Caco-2 (cell line): ENCODE measurements at regions of chr1 and their contacts with region 1.

Region 1: GRCh38 chr1:211258756-211259637 is at the start of gene RCOR3:
- DNase-seq: peak; percentile 95
- H3K4me3 ChIP-seq: peak within 1 kb of the TSS; percentile 79
- H3K4me3 Mint-ChIP-seq: peak within 1 kb of the TSS; percentile 83
- H3K27ac Mint-ChIP-seq: peak within 1 kb of the TSS; percentile 89
- H3K4me1 ChIP-seq: peaks cover 8% of the 10 kb centered on the region
- H3K4me1 Mint-ChIP-seq: peaks cover 9% of the 10 kb centered on the region
- H3K27me3 ChIP-seq: no peaks in the 10 kb centered on the region
- H3K27me3 Mint-ChIP-seq: no peaks in the 10 kb centered on the region
- CTCF ChIP-seq: peak; percentile 70 to 75
- total RNA-seq, gene RCOR3: 42.3 TPM in 2 replicates

Region 2: DNA sequence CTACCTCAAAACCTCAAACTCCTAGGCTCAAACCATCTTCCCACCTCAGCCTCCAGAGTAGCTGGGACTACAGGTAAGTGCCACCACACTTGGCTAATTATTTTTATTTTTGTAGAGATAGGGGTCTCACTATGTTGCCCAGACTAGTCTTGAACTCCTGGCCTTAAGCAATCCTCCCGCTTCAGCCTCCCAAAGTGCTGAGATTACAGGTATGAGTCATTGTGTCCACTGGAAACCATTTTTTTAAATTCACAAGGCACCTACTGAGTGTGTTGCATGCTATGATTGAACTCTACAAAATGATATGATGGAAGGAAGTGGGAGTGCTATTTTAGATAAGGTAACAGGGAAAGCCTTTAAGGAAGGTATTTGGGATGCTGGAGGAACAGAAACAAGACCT is 41.6 kb before region 1 on chr1:
- CTCF ChIA-PET with region 1: no interaction called
- POLR2A ChIA-PET with region 1: no interaction called
- intact Hi-C with region 1: loop called (anchors 1 kb)
- DNase-seq: no peak
- H3K4me3 ChIP-seq: no peak overlapping the region
- H3K4me3 Mint-ChIP-seq: no peak overlapping the region
- H3K27ac Mint-ChIP-seq: no peak overlapping the region
- H3K4me1 ChIP-seq: peaks cover 6% of the 10 kb centered on the region
- H3K4me1 Mint-ChIP-seq: peaks cover 7% of the 10 kb centered on the region
- H3K27me3 ChIP-seq: no peaks in the 10 kb centered on the region
- H3K27me3 Mint-ChIP-seq: peaks cover 3% of the 10 kb centered on the region
- CTCF ChIP-seq: no peak

Region 3: DNA sequence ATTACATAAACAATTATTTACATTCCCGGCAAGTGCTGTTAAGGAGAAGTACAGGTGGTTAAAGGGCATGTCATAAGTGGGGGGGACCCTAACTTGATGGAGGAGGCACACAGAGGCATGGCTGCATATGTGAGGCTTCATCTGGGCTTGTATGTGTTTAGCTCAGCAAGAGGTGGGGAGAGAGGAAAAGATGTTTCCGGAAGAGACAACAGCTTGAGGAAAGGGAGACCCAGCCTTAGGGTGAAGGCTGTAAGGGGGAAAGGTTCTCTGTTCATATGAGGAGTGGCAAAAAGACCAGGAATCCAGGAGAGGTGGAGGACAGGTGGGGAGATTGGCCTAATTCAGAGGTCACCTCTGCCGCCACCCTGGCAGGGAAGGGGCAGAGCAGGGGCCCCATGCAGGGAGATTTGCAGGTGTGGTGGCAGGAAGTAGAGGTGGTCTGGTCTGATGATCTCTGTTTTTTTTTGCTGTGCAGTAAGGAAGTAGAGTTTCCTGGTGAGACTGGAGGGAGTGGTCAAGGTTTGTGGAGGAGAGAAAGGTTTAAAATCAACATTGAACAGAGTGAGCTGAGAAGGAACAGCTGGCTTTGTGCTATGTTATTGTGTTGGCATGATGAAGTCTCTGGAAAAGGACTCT is 76.6 kb after region 1 on chr1:
- CTCF ChIA-PET with region 1: no interaction called
- POLR2A ChIA-PET with region 1: no interaction called
- intact Hi-C with region 1: no loop called
- DNase-seq: no peak
- H3K4me3 ChIP-seq: no peak overlapping the region
- H3K4me3 Mint-ChIP-seq: no peak overlapping the region
- H3K27ac Mint-ChIP-seq: no peak overlapping the region
- H3K4me1 ChIP-seq: peaks cover 16% of the 10 kb centered on the region
- H3K4me1 Mint-ChIP-seq: peaks cover 17% of the 10 kb centered on the region
- H3K27me3 ChIP-seq: no peaks in the 10 kb centered on the region
- H3K27me3 Mint-ChIP-seq: no peaks in the 10 kb centered on the region
- CTCF ChIP-seq: no peak

Region 4: GRCh38 chr1:211382714-211383480 is 123.9 kb after region 1 on chr1:
- CTCF ChIA-PET with region 1: no interaction called
- POLR2A ChIA-PET with region 1: no interaction called
- intact Hi-C with region 1: loop called (anchors 2 kb)
- DNase-seq: peak; percentile 93 to 94
- H3K4me3 ChIP-seq: peak overlapping the region; percentile 58
- H3K4me3 Mint-ChIP-seq: peak overlapping the region; percentile 95
- H3K27ac Mint-ChIP-seq: peak overlapping the region; percentile 100
- H3K4me1 ChIP-seq: no peaks in the 10 kb centered on the region
- H3K4me1 Mint-ChIP-seq: peaks cover 14% of the 10 kb centered on the region
- H3K27me3 ChIP-seq: no peaks in the 10 kb centered on the region
- H3K27me3 Mint-ChIP-seq: no peaks in the 10 kb centered on the region
- CTCF ChIP-seq: no peak